GM10248 (cell line): ENCODE measurements at regions of chr2 and their contacts with region 1.

Region 1: DNA sequence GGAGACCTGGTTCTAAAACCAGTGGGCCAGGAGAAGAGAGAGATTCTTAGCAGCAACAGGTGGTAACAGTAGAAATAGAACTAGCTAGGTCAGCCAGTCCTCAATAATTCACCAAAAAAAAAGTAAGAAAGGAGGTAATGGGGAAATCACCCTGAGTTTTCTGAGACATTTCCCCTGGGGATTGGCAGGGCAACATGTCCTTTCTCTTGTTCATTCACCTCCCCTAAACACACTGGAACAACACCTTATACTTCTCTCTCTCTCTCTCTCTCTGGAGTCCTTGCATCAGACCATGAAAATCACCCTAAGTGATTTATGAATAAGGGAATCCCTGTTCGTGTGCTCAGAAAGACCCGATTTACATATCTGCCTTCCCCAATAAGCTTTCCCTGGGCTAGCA is 64.8 kb downstream of the COX7A2L start:
- DNase-seq: peak; percentile 27
- CTCF ChIP-seq: no peak

Region 2: GRCh38 chr2:42216712-42217111 is 79.5 kb before region 1 on chr2:
- CTCF ChIA-PET with region 1: no interaction called
- POLR2A ChIA-PET with region 1: interaction called, 16 read pairs
- DNase-seq: no peak
- CTCF ChIP-seq: no peak

Region 3: DNA sequence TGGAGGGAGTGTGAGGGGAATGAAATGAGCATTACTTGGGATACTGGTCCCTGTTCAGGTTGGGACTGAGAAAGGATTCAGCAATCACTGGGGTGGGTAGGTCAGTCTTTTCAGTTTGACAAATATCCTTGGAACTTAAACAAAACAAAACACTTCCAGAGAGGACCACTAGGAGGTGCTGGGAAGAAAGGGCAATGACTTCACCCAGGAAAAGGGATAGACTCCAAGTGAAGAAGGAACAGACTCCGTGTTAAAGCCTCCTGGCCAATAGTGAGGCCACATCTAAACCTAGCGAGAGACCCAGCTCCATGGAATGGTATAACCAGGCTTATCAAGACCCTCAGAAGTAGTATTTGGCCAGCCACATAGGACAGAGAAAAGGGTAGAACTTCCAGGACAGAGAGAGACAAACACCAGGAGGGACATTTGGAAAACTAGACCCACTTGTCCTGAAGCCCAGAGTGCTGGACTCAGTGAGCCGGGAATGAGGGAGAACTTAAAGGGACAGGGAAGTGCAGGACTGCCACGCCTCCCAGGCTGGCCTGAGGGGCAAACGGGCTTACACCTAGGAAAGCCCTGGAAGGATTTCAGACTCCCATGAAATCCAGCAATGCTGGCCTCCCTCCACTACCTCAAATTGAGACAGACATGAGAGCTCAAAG is 217.2 kb after region 1 on chr2:
- CTCF ChIA-PET with region 1: no interaction called
- POLR2A ChIA-PET with region 1: no interaction called
- DNase-seq: peak; percentile 35
- CTCF ChIP-seq: peak; percentile 60